SK-N-SH (cell line): ENCODE measurements at regions of chr3 and their contacts with region 1.

Region 1: DNA sequence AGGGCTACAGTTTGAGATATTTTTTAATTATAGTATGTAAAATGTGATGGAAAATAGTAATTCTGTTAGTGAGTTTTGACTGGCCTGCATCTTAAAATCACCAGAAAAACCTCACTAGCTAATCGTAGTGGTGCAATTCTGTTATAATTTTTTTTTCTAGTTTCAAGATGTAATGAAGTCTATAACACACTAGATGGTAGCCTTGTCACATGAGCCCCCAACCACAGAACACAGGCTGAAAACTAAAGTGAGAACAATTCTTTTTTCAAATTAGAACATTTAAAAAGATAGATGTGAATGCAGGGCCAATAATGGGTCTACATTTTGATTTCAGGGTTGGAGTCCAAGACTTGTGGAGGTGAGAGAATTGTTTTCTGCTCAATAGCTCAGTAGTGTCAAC is 83.3 kb upstream of the KCNH8 start:
- DNase-seq: peak; percentile 31
- H3K4me3 ChIP-seq: no peak overlapping the region
- H3K27ac ChIP-seq: no peak overlapping the region
- H3K4me1 ChIP-seq: peaks cover 0 to 11% of the 10 kb centered on the region in 2 experiments; a peak in 2 of 4 replicates
- H3K27me3 ChIP-seq: no peaks in the 10 kb centered on the region
- CTCF ChIP-seq: peak; percentile 63
- EP300 ChIP-seq: no peak
- RAD21 ChIP-seq: peak; percentile 96

Region 2: DNA sequence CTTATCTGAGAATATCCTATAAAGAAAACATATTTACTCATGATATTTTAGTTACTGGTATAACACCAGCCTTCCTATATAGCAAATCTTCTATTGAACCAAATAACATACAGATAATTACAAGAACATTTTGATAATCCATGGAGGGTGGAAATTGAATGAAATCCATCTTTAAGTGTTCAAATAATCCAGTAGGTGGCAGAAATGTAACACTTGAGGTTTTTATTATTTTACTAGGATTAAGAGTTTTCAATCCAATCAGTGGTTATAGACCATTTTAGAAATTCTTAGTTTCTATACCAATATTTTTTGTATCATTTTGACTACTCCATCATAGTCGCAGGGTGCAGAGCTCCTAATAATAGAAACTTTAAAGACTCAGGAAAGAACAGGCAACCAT is 18.6 kb before region 1 on chr3:
- CTCF ChIA-PET with region 1: interaction called, 14 read pairs
- POLR2A ChIA-PET with region 1: no interaction called
- DNase-seq: peak; percentile 10
- H3K4me3 ChIP-seq: no peak overlapping the region
- H3K27ac ChIP-seq: no peak overlapping the region
- H3K4me1 ChIP-seq: no peaks in the 10 kb centered on the region
- H3K27me3 ChIP-seq: no peaks in the 10 kb centered on the region
- CTCF ChIP-seq: peak; percentile 52
- EP300 ChIP-seq: no peak
- RAD21 ChIP-seq: peak; percentile 58

Region 3: DNA sequence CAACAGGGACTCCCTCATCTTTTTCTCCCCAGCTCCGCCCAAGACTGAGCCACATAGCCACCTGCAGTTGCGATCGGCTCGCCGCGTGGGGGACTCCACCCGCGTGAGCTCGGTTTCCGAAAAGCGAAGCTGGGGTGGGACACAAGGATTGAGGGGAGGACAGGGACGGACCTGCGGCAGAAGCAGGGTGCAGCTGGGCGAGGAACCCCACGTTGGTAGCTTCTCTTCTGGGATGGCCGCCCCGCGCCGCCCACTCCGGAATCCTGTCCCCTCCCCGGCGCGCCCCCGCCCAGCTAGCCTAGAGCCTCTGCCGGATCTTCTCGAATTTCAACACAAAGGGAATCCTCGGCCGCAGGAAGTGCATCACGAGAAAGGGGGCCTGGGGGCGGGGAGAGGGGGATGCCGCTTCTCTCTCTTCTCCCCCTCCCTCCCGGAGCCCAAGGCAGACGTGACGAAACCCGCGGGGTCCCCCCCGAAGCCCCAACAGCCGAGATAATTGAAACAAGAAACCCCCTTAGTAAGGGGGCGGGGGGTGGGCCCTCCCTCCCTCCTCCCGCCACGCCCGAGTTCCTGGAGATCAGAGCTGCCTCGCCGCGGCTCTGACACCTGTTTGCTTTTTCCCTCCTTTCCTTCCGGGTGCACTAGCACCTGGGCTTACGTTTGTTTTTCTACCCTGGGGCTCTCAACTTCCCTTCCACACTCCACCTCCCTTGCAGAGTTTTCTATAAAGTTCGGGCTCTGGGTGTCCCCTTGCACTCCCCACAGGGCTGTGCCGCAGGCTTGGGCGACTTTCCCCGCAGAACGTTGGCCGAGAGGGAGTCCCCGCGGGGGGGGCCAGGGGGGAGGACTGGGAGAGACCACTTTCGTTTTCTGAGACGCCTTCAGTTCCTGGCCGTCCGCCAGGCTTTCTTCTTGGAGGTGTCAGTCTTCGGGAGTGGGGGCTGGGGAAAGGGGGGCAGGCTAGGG is 81.9 kb after region 1 on chr3:
- CTCF ChIA-PET with region 1: interaction called, 11 read pairs
- POLR2A ChIA-PET with region 1: interaction called, 4 read pairs
- DNase-seq: peak; percentile 92
- H3K4me3 ChIP-seq: peak overlapping the region; percentile 79 to 88
- H3K27ac ChIP-seq: peak overlapping the region in 1 of 2 experiments; percentile 89; a peak in 2 of 4 replicates
- H3K4me1 ChIP-seq: no peaks in the 10 kb centered on the region; a peak in 2 of 4 replicates
- H3K27me3 ChIP-seq: peaks cover 7% of the 10 kb centered on the region; the same call in 1 of the 2 replicates
- CTCF ChIP-seq: peak; percentile 52
- EP300 ChIP-seq: no peak
- RAD21 ChIP-seq: peak; percentile 25; the same call in 1 of the 2 replicates

Region 4: DNA sequence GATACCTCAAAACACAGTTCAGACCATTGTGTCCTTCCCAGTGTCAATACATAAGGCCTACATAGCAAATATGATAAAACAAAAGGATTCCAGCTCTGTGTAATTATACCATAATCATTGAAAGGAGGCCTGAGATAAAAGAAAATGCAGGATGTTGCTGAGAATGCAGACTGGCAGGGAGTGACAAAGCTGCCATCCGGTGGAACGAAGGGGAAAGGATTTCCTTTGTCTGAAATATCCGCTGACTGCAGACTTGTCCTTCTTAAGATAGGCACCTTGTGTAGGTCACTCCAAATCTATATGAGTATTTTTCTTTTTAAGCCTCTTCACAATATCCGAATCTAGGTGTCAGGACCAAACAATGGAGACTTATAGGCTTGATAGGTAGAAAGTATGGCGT is 191.3 kb after region 1 on chr3:
- CTCF ChIA-PET with region 1: interaction called, 17 read pairs
- POLR2A ChIA-PET with region 1: no interaction called
- DNase-seq: no peak
- H3K4me3 ChIP-seq: no peak overlapping the region
- H3K27ac ChIP-seq: no peak overlapping the region
- H3K4me1 ChIP-seq: no peaks in the 10 kb centered on the region
- H3K27me3 ChIP-seq: no peaks in the 10 kb centered on the region
- CTCF ChIP-seq: peak; percentile 23; the same call in 1 of the 2 replicates
- EP300 ChIP-seq: no peak
- RAD21 ChIP-seq: peak; percentile 68

Region 5: GRCh38 chr3:19543212-19543841 is 478.3 kb after region 1 on chr3:
- CTCF ChIA-PET with region 1: interaction called, 21 read pairs
- POLR2A ChIA-PET with region 1: no interaction called
- DNase-seq: peak; percentile 24
- H3K4me3 ChIP-seq: no peak overlapping the region
- H3K27ac ChIP-seq: no peak overlapping the region
- H3K4me1 ChIP-seq: no peaks in the 10 kb centered on the region; a peak in 1 of 4 replicates
- H3K27me3 ChIP-seq: no peaks in the 10 kb centered on the region
- CTCF ChIP-seq: peak; percentile 41
- EP300 ChIP-seq: no peak
- RAD21 ChIP-seq: peak; percentile 84